ENCODE measurements at regions of chr3 and their contacts with region 1.

Region 1: GRCh38 chr3:15557511-15557946 is 36.0 kb upstream of the COLQ start:
- DNase-seq: peak; percentile 60
- H3K4me3 Mint-ChIP-seq: no peak overlapping the region
- H3K27ac Mint-ChIP-seq: no peak overlapping the region
- H3K4me1 Mint-ChIP-seq: peaks cover 32% of the 10 kb centered on the region
- H3K27me3 Mint-ChIP-seq: no peaks in the 10 kb centered on the region

Region 2: DNA sequence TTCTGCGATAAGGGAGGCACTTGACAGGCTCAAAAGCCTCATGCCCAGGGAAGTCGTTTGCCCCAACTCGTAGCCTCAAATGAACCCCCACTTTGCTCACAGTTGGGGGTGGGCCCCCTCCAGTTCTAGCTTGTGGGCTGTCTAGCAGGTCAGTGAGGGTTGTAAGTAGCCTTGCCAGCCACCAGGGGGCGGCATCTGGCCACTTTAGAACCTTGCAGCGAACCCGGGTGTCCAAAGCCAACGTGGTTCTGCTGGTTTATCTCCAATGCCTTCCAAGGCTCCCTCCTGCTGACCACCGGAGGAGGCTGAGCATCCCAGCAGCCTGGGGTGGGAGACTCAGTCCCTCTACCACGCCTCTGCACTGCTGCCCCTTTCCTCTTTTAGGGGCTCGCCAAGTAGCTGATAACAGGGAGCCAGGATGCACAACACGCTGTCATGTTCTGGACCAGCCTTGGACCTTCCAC is 449.4 kb before region 1 on chr3:
- intact Hi-C with region 1: loop called (anchors 5 kb)
- DNase-seq: peak; percentile 55
- H3K4me3 Mint-ChIP-seq: no peak overlapping the region
- H3K27ac Mint-ChIP-seq: no peak overlapping the region
- H3K4me1 Mint-ChIP-seq: peaks cover 4% of the 10 kb centered on the region
- H3K27me3 Mint-ChIP-seq: peaks cover 11% of the 10 kb centered on the region

Region 3: GRCh38 chr3:15405448-15406050 is 152.0 kb before region 1 on chr3:
- intact Hi-C with region 1: loop called (anchors 1 kb)
- DNase-seq: no peak
- H3K4me3 Mint-ChIP-seq: no peak overlapping the region
- H3K27ac Mint-ChIP-seq: no peak overlapping the region
- H3K4me1 Mint-ChIP-seq: peaks cover 6% of the 10 kb centered on the region
- H3K27me3 Mint-ChIP-seq: no peaks in the 10 kb centered on the region

Region 4: GRCh38 chr3:15427182-15427880 is 130.2 kb before region 1 on chr3 and contains the starts of genes EAF1 and METTL6:
- intact Hi-C with region 1: loop called (anchors 1 kb)
- DNase-seq: peak; percentile 81
- H3K4me3 Mint-ChIP-seq: peak within 1 kb of the TSS; percentile 97
- H3K27ac Mint-ChIP-seq: peak within 1 kb of the TSS; percentile 96
- H3K4me1 Mint-ChIP-seq: peaks cover 61% of the 10 kb centered on the region
- H3K27me3 Mint-ChIP-seq: no peaks in the 10 kb centered on the region
- total RNA-seq, gene EAF1: 27.3 and 27.8 TPM in 2 replicates
- total RNA-seq, gene METTL6: 15.0 and 15.8 TPM in 2 replicates

Region 5: DNA sequence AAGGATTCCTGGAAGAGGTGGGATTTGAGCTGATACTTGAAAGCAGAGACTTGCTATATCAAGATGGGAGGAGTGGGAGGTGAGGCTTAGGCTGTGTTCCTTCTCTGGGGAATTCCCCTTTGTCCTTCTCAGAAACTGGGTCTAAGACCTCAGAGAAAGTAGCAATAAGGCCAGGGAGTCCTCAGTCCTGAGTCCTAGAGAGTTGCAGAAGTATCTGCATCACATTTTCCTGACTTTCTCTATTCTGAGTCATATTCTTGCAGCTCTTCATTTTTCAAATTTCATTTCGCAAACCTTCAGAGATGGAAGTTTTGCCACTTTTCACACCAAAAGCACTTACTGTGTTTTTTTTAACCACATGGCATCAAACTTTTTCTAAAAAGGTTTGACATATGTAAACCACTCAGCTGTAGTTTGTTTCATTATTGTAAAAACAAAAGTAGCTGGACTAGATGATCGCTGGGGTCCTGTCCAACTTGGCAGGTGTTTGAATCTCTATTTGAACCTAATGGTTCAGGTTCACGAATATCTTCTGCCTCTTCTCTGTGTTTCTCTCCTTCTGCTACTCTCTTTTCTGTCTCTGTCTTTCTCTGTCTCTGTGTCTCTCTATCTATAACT is 57.3 kb before region 1 on chr3:
- intact Hi-C with region 1: loop called (anchors 1 kb)
- DNase-seq: no peak
- H3K4me3 Mint-ChIP-seq: no peak overlapping the region
- H3K27ac Mint-ChIP-seq: peak overlapping the region; percentile 37
- H3K4me1 Mint-ChIP-seq: peaks cover 38% of the 10 kb centered on the region
- H3K27me3 Mint-ChIP-seq: peaks cover under 1% of the 10 kb centered on the region

Measured in activated T-helper 1 cell treated with anti-CD3 and anti-CD28 coated beads, Interleukin-12 subunit alpha, Interleukin-12 subunit beta, Interleukin-2, Interleukin-4 antibody, amounts not matched to agents 30 ng/mL and 10 ng/mL and 1 ng/mL, durations not matched to agents 14 hours and 24 hours and 36 hours (primary cell).